Activated B cell treated with CpG ODN at 0.5 μM for 24 hours (primary cell): ENCODE measurements at regions of chr5 and their contacts with region 1.

Region 1: GRCh38 chr5:140324617-140325241 is 21.7 kb downstream of the HBEGF start:
- DNase-seq: no peak
- ATAC-seq: no peak
- H3K4me3 Mint-ChIP-seq: no peak overlapping the region
- H3K27ac Mint-ChIP-seq: no peak overlapping the region
- H3K4me1 Mint-ChIP-seq: no peaks in the 10 kb centered on the region
- H3K27me3 Mint-ChIP-seq: no peaks in the 10 kb centered on the region
- CTCF ChIP-seq: no peak

Region 2: DNA sequence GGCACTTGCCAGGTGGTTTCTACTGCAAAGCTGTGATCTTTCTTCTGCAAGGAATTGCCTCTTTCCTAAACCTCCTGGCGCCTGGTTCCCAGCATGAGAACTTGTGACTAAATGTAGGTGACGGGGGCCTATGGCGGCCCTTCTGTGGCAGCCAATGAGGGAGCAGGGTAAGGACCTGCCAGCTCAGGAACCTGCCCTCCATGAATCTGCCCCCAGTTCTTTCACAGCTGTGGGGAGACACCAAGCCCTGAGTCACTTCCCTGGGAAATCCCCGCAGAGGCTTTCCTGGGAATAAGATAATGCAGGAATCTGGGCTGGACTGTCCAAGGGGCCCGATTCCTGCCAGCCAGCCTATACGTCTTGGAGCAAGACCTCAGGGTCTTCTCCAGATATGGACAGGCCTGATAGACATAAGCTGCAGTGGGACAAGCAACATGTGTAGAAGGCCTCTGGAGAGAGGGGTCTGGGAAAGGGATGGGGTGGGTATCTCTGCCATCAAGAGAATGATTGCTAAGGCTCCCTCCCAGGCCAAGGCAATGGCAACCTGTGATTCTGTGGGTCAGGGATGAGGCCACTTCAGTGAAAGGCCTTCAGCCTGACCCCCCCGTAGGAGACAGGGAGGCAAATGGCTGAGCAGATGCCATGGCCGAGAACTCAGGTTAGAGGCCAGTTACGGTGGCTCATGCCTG is 1628.1 kb before region 1 on chr5:
- CTCF ChIA-PET with region 1: no interaction called
- POLR2A ChIA-PET with region 1: no interaction called
- intact Hi-C with region 1: loop called (anchors 5 kb)
- DNase-seq: no peak
- ATAC-seq: no peak
- H3K4me3 Mint-ChIP-seq: no peak overlapping the region
- H3K27ac Mint-ChIP-seq: no peak overlapping the region
- H3K4me1 Mint-ChIP-seq: no peaks in the 10 kb centered on the region
- H3K27me3 Mint-ChIP-seq: peaks cover 12% of the 10 kb centered on the region
- CTCF ChIP-seq: no peak

Region 3: DNA sequence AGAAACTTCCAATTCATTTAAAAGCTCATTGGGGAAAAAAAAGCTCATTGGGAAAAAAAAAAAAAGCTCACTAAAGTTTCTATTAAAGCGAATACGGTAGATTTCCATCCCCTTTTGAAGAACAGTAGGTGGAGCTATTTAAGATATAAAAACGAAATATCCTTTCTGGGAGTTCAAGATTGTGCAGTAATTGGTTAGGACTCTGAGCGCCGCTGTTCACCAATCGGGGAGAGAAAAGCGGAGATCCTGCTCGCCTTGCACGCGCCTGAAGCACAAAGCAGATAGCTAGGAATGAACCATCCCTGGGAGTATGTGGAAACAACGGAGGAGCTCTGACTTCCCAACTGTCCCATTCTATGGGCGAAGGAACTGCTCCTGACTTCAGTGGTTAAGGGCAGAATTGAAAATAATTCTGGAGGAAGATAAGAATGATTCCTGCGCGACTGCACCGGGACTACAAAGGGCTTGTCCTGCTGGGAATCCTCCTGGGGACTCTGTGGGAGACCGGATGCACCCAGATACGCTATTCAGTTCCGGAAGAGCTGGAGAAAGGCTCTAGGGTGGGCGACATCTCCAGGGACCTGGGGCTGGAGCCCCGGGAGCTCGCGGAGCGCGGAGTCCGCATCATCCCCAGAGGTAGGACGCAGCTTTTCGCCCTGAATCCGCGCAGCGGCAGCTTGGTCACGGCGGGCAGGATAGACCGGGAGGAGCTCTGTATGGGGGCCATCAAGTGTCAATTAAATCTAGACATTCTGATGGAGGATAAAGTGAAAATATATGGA is 1105.8 kb after region 1 on chr5 and contains the start of gene PCDHGA12:
- CTCF ChIA-PET with region 1: no interaction called
- POLR2A ChIA-PET with region 1: no interaction called
- intact Hi-C with region 1: no loop called
- DNase-seq: no peak
- ATAC-seq: peak; percentile 86
- H3K4me3 Mint-ChIP-seq: peak within 1 kb of the TSS; percentile 80
- H3K27ac Mint-ChIP-seq: peak within 1 kb of the TSS; percentile 76
- H3K4me1 Mint-ChIP-seq: peaks cover 16% of the 10 kb centered on the region
- H3K27me3 Mint-ChIP-seq: peaks cover 46% of the 10 kb centered on the region
- CTCF ChIP-seq: no peak
- total RNA-seq, gene PCDHGA12: 1.3 and 1.6 TPM in 2 replicates